GM12878 (cell line): ENCODE measurements at regions of chr6 and their contacts with region 1.

Region 1: GRCh38 chr6:16761471-16762267 is 409 bp upstream of the ATXN1 start:
- DNase-seq: no peak
- ATAC-seq: peak; percentile 64
- H3K4me3 ChIP-seq: peak overlapping the region; percentile 80
- H3K27ac ChIP-seq: peak overlapping the region; percentile 68
- H3K4me1 ChIP-seq: peaks cover 8% of the 10 kb centered on the region; the same call in 1 of the 2 replicates
- H3K27me3 ChIP-seq: no peaks in the 10 kb centered on the region
- CTCF ChIP-seq: peak; percentile 24 to 48 (median 41); a peak in 3 of 6 replicates
- EP300 ChIP-seq: no peak; a peak in 1 of 4 replicates
- POLR2A ChIP-seq: peak; percentile 68
- RAD21 ChIP-seq: peak; percentile 64

Region 2: DNA sequence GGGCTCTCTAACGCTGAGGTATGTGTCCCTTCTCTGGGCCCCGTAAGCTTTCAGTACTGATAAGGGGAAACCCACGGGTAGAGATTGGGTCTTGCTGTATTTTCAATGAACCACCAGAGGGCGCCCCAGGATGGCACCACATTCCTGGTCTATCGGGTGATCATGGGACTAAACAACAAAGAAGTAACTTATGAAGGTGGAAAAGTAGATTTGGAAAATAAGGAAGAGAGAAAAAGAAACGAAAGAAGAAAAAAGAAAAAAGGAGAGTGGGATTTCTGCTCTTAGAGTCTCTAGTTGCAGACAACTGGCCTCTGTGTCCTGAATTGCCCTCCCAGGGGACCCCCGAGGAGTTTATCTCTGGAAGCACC is 429.5 kb before region 1 on chr6:
- CTCF ChIA-PET with region 1: interaction called, 115 read pairs
- POLR2A ChIA-PET with region 1: interaction called, 5 read pairs
- RAD21 ChIA-PET with region 1: interaction called, 41 read pairs
- SMC1A ChIA-PET with region 1: interaction called, 51 read pairs
- in situ Hi-C with region 1: loop called (anchors 5 kb)
- intact Hi-C with region 1: loop called (anchors 1 kb)
- DNase-seq: peak; percentile 78
- ATAC-seq: peak; percentile 99
- H3K4me3 ChIP-seq: no peak overlapping the region
- H3K27ac ChIP-seq: peak overlapping the region; percentile 13; the same call in 1 of the 2 replicates
- H3K4me1 ChIP-seq: peaks cover 19% of the 10 kb centered on the region
- H3K27me3 ChIP-seq: no peaks in the 10 kb centered on the region
- CTCF ChIP-seq: peak; percentile 77 to 95 (median 94); a peak in 5 of 6 replicates
- EP300 ChIP-seq: no peak
- POLR2A ChIP-seq: no peak
- RAD21 ChIP-seq: peak; percentile 99

Region 3: DNA sequence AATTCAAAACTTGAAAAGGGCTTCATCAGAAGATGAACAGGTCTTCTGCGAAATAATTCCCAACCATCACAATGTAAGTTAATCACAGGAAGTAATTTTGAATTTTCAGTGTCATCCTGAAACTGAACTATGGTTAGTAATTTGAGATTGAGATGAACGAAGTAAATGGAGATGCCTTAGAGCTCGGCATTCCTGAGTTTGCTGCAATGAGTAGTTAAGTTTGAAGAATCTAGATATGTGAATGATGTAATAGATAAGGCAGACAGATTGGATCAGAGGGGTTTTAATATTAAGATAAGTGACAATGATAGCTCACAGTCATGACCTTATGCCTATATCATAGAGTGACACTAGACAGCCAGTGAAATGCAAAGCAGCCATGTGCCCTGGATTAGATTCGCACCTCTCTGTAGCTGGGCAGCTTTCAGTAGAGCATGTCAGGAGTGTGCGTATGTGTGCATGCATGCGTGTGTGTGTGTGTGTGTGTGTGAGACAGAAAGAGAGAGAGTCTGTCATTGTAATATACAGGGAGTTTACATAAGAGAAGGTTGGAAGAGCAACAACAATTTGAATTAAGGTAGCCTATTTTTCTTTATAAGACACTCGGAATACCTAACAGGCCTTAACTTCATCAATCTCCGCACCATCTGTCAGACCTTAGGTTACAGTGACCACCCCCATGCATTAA is 290.3 kb before region 1 on chr6:
- CTCF ChIA-PET with region 1: interaction called, 11 read pairs
- POLR2A ChIA-PET with region 1: interaction called, 8 read pairs
- RAD21 ChIA-PET with region 1: interaction called, 33 read pairs
- SMC1A ChIA-PET with region 1: interaction called, 43 read pairs
- in situ Hi-C with region 1: no loop called
- intact Hi-C with region 1: loop called (anchors 5 kb)
- DNase-seq: peak; percentile 76
- ATAC-seq: peak; percentile 71
- H3K4me3 ChIP-seq: 0 out of 2 replicates have a peak overlapping the region, but pooled peaks have one; percentile 9
- H3K27ac ChIP-seq: peak overlapping the region; percentile 90
- H3K4me1 ChIP-seq: peaks cover 71% of the 10 kb centered on the region
- H3K27me3 ChIP-seq: no peaks in the 10 kb centered on the region
- CTCF ChIP-seq: no peak
- EP300 ChIP-seq: peak; percentile 74 to 81; a peak in 3 of 4 replicates
- POLR2A ChIP-seq: peak; percentile 47; the same call in 1 of the 2 replicates
- RAD21 ChIP-seq: no peak

Region 4: DNA sequence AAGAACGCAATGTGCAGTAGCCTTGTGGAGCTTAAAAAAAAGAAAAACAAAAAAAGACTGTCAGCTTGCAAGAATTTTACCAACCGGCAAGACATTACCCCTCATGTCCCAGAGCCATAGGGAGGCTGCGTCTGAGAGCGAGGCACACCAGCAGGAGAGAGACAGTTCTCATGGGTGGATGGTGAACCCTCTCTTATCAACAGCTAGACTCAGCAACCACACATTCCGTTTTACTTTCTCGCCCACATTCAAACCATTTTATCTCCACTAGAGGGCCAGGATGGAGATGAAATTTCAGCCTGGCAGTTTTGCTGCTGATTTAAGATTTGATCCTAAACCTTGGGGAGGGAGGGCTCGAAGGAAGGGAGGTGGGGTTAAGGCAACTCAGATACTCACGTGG is 247.4 kb before region 1 on chr6:
- CTCF ChIA-PET with region 1: interaction called, 174 read pairs
- POLR2A ChIA-PET with region 1: interaction called, 7 read pairs
- RAD21 ChIA-PET with region 1: interaction called, 110 read pairs
- SMC1A ChIA-PET with region 1: interaction called, 111 read pairs
- in situ Hi-C with region 1: loop called (anchors 5 kb)
- intact Hi-C with region 1: loop called (anchors 5 kb)
- DNase-seq: no peak
- ATAC-seq: peak; percentile 50
- H3K4me3 ChIP-seq: no peak overlapping the region
- H3K27ac ChIP-seq: no peak overlapping the region
- H3K4me1 ChIP-seq: peaks cover 45% of the 10 kb centered on the region
- H3K27me3 ChIP-seq: no peaks in the 10 kb centered on the region
- CTCF ChIP-seq: peak; percentile 49 to 62 (median 60)
- EP300 ChIP-seq: no peak
- POLR2A ChIP-seq: no peak
- RAD21 ChIP-seq: peak; percentile 78

Region 5: GRCh38 chr6:16651871-16652270 is 109.8 kb before region 1 on chr6:
- CTCF ChIA-PET with region 1: interaction called, 8 read pairs
- POLR2A ChIA-PET with region 1: interaction called, 3 read pairs
- RAD21 ChIA-PET with region 1: interaction called, 9 read pairs
- SMC1A ChIA-PET with region 1: interaction called, 7 read pairs
- in situ Hi-C with region 1: no loop called
- intact Hi-C with region 1: loop called (anchors 5 kb)
- DNase-seq: no peak
- ATAC-seq: peak; percentile 86
- H3K4me3 ChIP-seq: no peak overlapping the region
- H3K27ac ChIP-seq: no peak overlapping the region
- H3K4me1 ChIP-seq: peaks cover 18% of the 10 kb centered on the region
- H3K27me3 ChIP-seq: no peaks in the 10 kb centered on the region
- CTCF ChIP-seq: no peak
- EP300 ChIP-seq: no peak
- POLR2A ChIP-seq: no peak
- RAD21 ChIP-seq: no peak

Region 6: GRCh38 chr6:16741112-16742016 is 20.3 kb before region 1 on chr6:
- CTCF ChIA-PET with region 1: interaction called, 13 read pairs
- POLR2A ChIA-PET with region 1: interaction called, 4 read pairs
- RAD21 ChIA-PET with region 1: interaction called, 13 read pairs
- SMC1A ChIA-PET with region 1: interaction called, 8 read pairs
- in situ Hi-C with region 1: no loop called
- intact Hi-C with region 1: no loop called
- DNase-seq: no peak
- ATAC-seq: peak; percentile 81
- H3K4me3 ChIP-seq: no peak overlapping the region
- H3K27ac ChIP-seq: no peak overlapping the region
- H3K4me1 ChIP-seq: 0 out of 2 replicates have a peak, but pooled peaks cover 6% of the 10 kb centered on the region
- H3K27me3 ChIP-seq: no peaks in the 10 kb centered on the region
- CTCF ChIP-seq: no peak
- EP300 ChIP-seq: peak in 1 of 2 experiments; percentile 48; a peak in 1 of 4 replicates
- POLR2A ChIP-seq: no peak
- RAD21 ChIP-seq: no peak

Region 7: GRCh38 chr6:17086469-17086868 is 324.8 kb after region 1 on chr6:
- CTCF ChIA-PET with region 1: interaction called, 27 read pairs
- POLR2A ChIA-PET with region 1: no interaction called
- RAD21 ChIA-PET with region 1: interaction called, 5 read pairs
- SMC1A ChIA-PET with region 1: interaction called, 3 read pairs
- in situ Hi-C with region 1: no loop called
- intact Hi-C with region 1: no loop called
- DNase-seq: no peak
- ATAC-seq: peak; percentile 81
- H3K4me3 ChIP-seq: no peak overlapping the region
- H3K27ac ChIP-seq: no peak overlapping the region
- H3K4me1 ChIP-seq: no peaks in the 10 kb centered on the region
- H3K27me3 ChIP-seq: no peaks in the 10 kb centered on the region
- CTCF ChIP-seq: peak; percentile 46 to 56 (median 52)
- EP300 ChIP-seq: no peak
- POLR2A ChIP-seq: no peak
- RAD21 ChIP-seq: peak; percentile 63